Activated CD4-positive, alpha-beta memory T cell treated with anti-CD3 and anti-CD28 coated beads for 36 hours (primary cell): ENCODE measurements at regions of chr7 and their contacts with region 1.

Region 1: DNA sequence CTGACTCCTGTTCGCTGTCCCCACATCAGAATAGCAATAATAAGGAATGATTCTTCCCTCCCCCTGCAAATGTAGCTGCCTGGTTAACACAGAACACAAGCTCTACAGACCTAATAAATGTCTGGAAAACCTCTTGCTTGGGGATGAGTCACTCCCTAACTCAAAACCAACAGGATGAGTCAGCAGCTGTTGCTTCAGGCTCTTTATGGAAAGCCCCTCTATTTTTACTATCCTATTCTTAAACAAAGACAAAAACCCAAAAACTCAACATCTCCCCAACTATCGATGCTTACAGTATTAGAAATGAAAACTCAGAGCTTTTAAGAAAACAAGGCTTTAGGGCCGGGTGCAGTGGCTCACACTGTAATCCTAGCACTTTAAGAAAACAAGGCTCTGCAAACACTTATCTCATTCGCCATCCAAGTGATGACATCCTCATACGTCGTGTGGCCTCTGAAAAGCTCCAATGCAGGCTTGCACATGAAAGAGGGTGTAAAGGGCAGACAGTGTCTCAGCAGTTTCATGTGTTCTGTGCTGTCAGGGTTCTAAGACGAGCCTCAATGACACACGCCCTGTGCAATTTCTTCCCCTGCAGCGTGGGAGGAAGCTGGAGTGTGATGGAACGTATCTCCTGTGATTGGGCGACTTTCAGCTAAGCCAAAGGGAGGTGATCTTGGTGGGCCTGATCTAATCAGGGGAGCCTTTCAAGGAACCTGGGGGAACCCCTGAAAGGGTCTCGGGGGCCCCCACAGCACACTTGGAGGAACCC is 70.1 kb downstream of the AMZ1 start:
- DNase-seq: peak; percentile 93
- H3K4me3 Mint-ChIP-seq: peak overlapping the region; percentile 57
- H3K27ac Mint-ChIP-seq: peak overlapping the region; percentile 96
- H3K4me1 Mint-ChIP-seq: peaks cover 47% of the 10 kb centered on the region
- H3K27me3 Mint-ChIP-seq: no peaks in the 10 kb centered on the region

Region 2: DNA sequence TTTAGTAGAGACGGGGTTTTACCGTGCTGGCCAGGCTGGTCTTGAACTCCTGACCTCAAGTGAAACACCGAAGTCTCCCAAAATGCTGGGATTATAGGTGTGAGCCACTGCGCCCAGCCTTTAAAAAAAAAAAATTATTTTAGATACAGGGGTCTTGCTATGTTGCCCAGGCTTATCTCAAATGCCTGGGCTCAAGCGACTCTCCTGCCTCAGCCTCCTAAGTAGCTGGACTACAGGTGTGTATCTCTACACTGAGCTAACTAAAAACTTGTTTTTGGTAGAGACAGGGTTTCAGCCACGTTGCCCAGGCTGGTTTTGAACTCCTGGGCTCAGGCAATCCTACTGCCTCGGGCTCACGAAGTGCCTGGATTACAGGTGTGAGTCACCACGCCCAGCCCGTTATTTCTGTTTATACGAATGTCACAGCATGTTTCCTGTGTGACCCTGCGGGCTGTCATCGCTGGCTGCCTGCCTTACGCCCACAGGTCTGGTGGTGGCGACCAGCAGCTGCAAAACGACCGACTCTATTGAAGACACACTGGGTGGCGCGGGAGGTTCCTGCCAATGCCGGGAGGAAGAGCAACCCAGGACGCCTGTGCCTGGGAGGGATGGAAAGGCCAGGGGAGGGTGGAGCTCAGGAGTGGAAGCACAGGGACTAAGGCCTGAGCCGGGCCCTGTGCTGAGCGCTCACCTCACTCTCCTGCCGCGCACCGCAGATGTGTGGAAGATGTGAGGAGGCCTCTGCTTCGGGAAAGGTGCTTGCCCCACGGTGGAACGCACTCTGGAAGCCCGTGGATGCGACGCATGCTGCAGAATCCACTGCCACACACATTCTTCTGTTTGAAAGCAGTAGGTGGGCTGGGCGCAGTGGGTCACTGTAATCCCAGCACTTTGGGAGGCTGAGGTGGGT is 37.3 kb before region 1 on chr7:
- CTCF ChIA-PET with region 1: interaction called, 22 read pairs
- POLR2A ChIA-PET with region 1: interaction called, 6 read pairs
- intact Hi-C with region 1: loop called (anchors 1 kb)
- DNase-seq: peak; percentile 95
- H3K4me3 Mint-ChIP-seq: peak overlapping the region; percentile 16
- H3K27ac Mint-ChIP-seq: peak overlapping the region; percentile 56
- H3K4me1 Mint-ChIP-seq: peaks cover 47% of the 10 kb centered on the region
- H3K27me3 Mint-ChIP-seq: no peaks in the 10 kb centered on the region

Region 3: DNA sequence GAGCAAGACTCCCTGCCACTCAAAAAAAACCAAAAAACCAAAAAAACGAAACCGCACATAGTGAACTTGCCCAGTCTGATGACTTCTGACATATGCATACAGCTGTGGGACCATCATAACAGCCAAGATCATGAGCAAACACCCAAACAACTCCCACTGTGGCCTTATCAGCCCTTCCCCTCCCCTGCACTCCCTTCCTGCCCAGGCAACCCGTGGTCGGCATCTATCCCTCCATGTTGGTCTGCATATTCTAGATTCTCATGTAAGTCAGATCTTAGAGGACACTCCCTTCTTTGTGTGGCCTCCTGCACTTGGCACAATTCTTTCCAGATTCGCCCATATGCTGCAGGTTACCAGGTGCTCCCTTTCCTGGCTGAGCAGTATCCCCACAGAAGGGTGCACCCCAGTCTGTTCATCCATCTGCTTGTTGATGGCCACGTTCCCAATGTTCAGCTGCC is 13.2 kb after region 1 on chr7:
- CTCF ChIA-PET with region 1: interaction called, 8 read pairs
- POLR2A ChIA-PET with region 1: interaction called, 6 read pairs
- intact Hi-C with region 1: loop called (anchors 1 kb)
- DNase-seq: no peak
- H3K4me3 Mint-ChIP-seq: no peak overlapping the region
- H3K27ac Mint-ChIP-seq: no peak overlapping the region
- H3K4me1 Mint-ChIP-seq: peaks cover 43% of the 10 kb centered on the region
- H3K27me3 Mint-ChIP-seq: no peaks in the 10 kb centered on the region

Region 4: GRCh38 chr7:2792856-2793487 is 34.9 kb after region 1 on chr7:
- CTCF ChIA-PET with region 1: no interaction called
- POLR2A ChIA-PET with region 1: no interaction called
- intact Hi-C with region 1: no loop called
- DNase-seq: no peak
- H3K4me3 Mint-ChIP-seq: no peak overlapping the region
- H3K27ac Mint-ChIP-seq: no peak overlapping the region
- H3K4me1 Mint-ChIP-seq: no peaks in the 10 kb centered on the region
- H3K27me3 Mint-ChIP-seq: no peaks in the 10 kb centered on the region

Region 5: GRCh38 chr7:2807845-2808772 is 50.0 kb after region 1 on chr7:
- CTCF ChIA-PET with region 1: no interaction called
- POLR2A ChIA-PET with region 1: no interaction called
- intact Hi-C with region 1: no loop called
- DNase-seq: no peak
- H3K4me3 Mint-ChIP-seq: no peak overlapping the region
- H3K27ac Mint-ChIP-seq: no peak overlapping the region
- H3K4me1 Mint-ChIP-seq: peaks cover 8% of the 10 kb centered on the region
- H3K27me3 Mint-ChIP-seq: no peaks in the 10 kb centered on the region

Region 6: DNA sequence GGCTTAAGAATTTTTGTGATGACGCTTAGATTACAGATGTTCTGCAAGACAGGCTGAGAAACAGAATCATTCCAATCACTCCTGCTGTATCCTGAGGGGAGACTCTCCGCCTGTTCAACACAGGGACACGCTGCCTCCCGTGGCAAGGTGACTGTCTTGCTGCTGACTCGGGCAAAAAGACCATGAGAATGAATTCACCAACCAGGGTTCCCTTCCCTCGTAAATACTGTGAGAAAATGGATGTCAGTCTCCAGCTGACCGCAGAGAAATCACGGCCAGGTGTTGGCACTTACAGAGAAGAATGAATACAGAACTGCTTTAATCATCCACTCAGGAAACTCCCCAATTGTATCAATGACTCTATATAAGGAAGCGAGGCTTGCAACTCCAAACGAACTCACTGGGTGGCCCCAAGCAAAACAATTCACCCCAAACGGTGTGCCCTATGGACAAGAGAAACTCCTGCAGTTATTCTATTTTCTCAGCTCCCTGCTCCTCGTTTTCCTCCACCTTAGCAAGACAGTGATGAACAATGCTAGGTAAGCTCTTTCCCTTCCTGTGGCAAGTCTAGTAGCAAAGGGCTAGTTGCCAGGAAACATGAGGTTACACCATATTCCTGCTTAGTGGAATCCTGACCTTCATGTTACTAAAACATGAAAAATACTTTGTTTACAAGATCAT is 63.2 kb after region 1 on chr7:
- CTCF ChIA-PET with region 1: interaction called, 4 read pairs
- POLR2A ChIA-PET with region 1: interaction called, 3 read pairs
- intact Hi-C with region 1: loop called (anchors 5 kb)
- DNase-seq: peak; percentile 20
- H3K4me3 Mint-ChIP-seq: no peak overlapping the region
- H3K27ac Mint-ChIP-seq: no peak overlapping the region
- H3K4me1 Mint-ChIP-seq: peaks cover 39% of the 10 kb centered on the region
- H3K27me3 Mint-ChIP-seq: no peaks in the 10 kb centered on the region

Region 7: DNA sequence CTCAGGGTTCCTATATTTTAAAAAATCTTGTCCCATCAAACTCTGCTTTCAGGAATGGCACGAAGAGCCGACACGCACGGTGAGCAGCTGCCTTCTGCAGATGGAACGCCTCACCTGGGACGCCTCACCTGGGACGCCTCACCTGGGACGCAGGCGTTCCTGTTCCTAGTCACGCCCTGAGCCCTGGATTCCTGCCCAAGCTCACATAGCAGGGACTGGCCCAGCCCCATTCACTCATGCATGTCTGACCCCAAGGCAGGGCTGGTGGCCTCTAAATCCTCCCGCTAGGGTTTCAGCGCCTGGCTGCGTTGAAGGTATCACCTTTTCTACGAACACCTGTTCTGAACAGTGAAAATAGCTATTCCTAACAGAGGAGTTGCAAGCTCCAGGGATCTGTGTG is 235.8 kb after region 1 on chr7:
- CTCF ChIA-PET with region 1: no interaction called
- POLR2A ChIA-PET with region 1: no interaction called
- intact Hi-C with region 1: no loop called
- DNase-seq: no peak
- H3K4me3 Mint-ChIP-seq: no peak overlapping the region
- H3K27ac Mint-ChIP-seq: no peak overlapping the region
- H3K4me1 Mint-ChIP-seq: peaks cover 3% of the 10 kb centered on the region
- H3K27me3 Mint-ChIP-seq: no peaks in the 10 kb centered on the region

Region 8: GRCh38 chr7:3112479-3113134 is 354.5 kb after region 1 on chr7:
- CTCF ChIA-PET with region 1: no interaction called
- POLR2A ChIA-PET with region 1: no interaction called
- intact Hi-C with region 1: loop called (anchors 10 kb)
- DNase-seq: peak; percentile 76
- H3K4me3 Mint-ChIP-seq: peak overlapping the region; percentile 13
- H3K27ac Mint-ChIP-seq: peak overlapping the region; percentile 71
- H3K4me1 Mint-ChIP-seq: peaks cover 71% of the 10 kb centered on the region
- H3K27me3 Mint-ChIP-seq: no peaks in the 10 kb centered on the region